ENCODE measurements at regions of chr17 and their contacts with region 1.

Region 1: GRCh38 chr17:27455914-27456680 is at the start of gene KSR1:
- DNase-seq: peak; percentile 88
- ATAC-seq: peak; percentile 92
- H3K4me3 Mint-ChIP-seq: peak within 1 kb of the TSS; percentile 81
- H3K27ac Mint-ChIP-seq: peak within 1 kb of the TSS; percentile 69
- H3K4me1 Mint-ChIP-seq: peaks cover 58% of the 10 kb centered on the region
- H3K27me3 Mint-ChIP-seq: no peaks in the 10 kb centered on the region
- total RNA-seq, gene KSR1: 56.6 to 70.4 TPM

Region 2: GRCh38 chr17:27466743-27467375 is 10.8 kb after region 1 on chr17:
- CTCF ChIA-PET with region 1: interaction called, 43 read pairs
- DNase-seq: peak; percentile 91
- ATAC-seq: peak; percentile 86
- H3K4me3 Mint-ChIP-seq: peak overlapping the region; percentile 63
- H3K27ac Mint-ChIP-seq: peak overlapping the region; percentile 96
- H3K4me1 Mint-ChIP-seq: peaks cover 90% of the 10 kb centered on the region
- H3K27me3 Mint-ChIP-seq: no peaks in the 10 kb centered on the region

Region 3: DNA sequence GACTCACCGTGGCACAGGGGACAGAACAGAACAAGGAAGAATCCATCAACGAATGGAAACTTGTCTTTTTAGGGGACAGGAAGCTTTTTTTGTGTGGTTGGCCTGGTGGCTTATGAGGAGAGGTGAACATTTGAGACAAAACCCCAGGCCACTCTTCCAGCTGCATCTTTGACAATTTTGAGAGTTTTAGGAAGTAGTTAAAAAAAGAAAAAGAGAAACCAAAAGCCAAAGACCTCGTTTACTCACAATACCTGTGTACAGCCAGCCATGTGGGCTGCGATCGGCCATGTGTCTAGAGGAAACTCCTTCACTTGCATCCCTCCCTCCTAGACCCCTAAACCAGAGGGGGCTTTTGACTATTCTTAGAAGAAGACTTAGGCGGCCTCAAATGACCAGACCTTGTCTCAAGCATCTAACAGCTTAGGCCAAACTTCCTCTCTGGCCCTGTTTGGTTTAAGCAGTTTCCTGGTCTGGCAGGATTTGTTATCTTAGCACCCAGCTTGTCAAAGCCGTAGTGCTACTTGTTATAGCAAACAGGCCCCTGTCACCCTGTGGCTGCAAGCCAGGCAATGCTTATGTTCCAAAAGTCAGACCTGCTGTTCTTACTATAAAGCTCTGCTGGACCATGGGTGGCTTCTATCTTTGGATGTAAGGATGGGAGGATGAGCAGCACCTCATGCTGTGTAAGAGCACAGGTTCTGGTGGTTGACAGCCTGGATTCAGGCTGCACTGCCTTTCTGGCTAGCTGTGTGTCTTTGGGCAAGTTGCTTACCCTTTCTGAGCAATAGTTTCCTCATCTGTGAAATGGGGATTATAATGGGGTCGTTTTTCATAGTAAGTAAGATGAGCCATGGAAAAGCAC is 17.9 kb after region 1 on chr17:
- CTCF ChIA-PET with region 1: interaction called, 43 read pairs
- DNase-seq: peak; percentile 92
- ATAC-seq: peak; percentile 37
- H3K4me3 Mint-ChIP-seq: peak overlapping the region; percentile 68
- H3K27ac Mint-ChIP-seq: peak overlapping the region; percentile 91
- H3K4me1 Mint-ChIP-seq: peaks cover 92% of the 10 kb centered on the region
- H3K27me3 Mint-ChIP-seq: no peaks in the 10 kb centered on the region

Region 4: GRCh38 chr17:27481327-27481726 is 25.2 kb after region 1 on chr17:
- CTCF ChIA-PET with region 1: interaction called, 21 read pairs
- DNase-seq: peak; percentile 91
- ATAC-seq: peak; percentile 97
- H3K4me3 Mint-ChIP-seq: peak overlapping the region; percentile 32
- H3K27ac Mint-ChIP-seq: peak overlapping the region; percentile 77
- H3K4me1 Mint-ChIP-seq: peaks cover 74% of the 10 kb centered on the region
- H3K27me3 Mint-ChIP-seq: no peaks in the 10 kb centered on the region